CD8-positive, alpha-beta memory T cell (primary cell): ENCODE measurements at regions of chr15 and their contacts with region 1.

Region 1: DNA sequence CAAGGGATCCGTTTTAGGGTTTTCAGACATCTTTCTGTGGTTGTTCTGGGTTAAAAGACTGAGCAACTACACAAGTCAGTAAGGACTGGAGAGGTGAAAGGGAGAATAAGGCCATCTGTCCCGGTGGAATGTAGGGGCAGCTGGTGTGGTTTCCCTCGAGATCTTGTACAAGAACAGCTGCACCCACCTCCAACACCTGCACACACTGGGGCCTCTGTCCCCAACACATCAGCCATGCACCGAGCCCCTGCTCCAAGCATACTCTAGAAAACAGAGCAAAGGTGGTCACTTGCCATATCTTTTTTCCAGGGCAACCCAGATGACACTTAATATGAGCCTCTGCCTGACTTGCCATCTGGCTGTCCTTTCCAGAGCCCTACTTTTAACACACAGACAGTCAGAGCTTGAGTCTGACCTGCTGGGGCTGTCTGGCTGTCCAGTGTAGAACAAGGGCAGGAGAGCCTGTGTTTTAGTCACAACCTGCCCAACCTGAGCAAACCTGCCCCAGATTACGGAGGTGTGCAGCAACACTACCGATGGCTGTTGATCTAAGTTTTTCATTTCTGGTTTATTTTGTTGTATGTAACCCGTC is 12.2 kb downstream of the MAN2A2 start:
- DNase-seq: no peak
- H3K4me3 ChIP-seq: no peak overlapping the region
- H3K4me3 Mint-ChIP-seq: no peak overlapping the region
- H3K27ac ChIP-seq: peak overlapping the region; percentile 65
- H3K27ac Mint-ChIP-seq: peak overlapping the region in 3 of 8 donors; percentile 32 to 83 (median 75)
- H3K4me1 ChIP-seq: no peaks in the 10 kb centered on the region
- H3K4me1 Mint-ChIP-seq: no peaks in the 10 kb centered on the region
- H3K27me3 ChIP-seq: no peaks in the 10 kb centered on the region
- H3K27me3 Mint-ChIP-seq: peaks cover 0 to 4% of the 10 kb centered on the region in 2 donors

Region 2: DNA sequence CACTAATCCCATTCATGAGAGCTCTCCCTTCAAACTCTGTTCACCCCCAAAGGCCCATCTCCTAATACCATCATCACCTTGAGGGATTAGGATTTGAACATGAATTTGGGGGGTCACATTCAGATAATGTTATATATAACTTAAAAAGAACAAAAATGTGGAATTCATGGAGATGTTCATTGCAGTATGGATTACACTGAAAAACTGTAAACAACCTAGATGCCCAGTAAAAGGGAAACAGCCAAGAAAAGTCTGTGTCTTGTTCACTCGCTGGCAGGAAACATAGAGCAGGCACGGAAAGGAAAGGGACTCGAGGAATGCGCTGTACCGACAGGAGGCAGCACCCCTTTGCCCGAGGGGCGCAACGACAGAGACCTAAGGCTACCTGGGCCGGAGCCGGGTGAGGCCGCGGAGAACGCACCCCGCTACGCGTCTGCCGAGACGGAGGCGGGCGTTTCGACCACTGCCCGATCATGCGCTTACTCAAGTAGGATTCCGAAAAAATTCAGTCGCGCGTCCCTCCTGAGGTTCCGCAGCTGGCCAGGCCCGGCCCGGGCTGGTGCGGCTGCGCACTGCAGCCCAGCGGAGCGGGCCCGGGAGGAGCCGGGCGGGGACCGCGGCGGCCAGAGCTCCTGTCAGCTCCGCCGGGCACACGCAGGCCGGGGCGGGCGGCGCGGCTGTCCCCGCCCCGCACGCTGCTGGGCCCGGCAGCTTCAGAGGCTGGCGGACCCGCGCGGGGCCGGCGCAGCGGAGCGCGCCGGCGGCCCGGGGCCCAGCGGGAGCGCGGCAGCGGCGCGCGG is 13.1 kb before region 1 on chr15:
- CTCF ChIA-PET with region 1: interaction called, 13 read pairs
- POLR2A ChIA-PET with region 1: no interaction called
- DNase-seq: peak; percentile 59 to 81 (median 74)
- H3K4me3 ChIP-seq: peak overlapping the region; percentile 87
- H3K4me3 Mint-ChIP-seq: peak overlapping the region; percentile 86 to 93 (median 91)
- H3K27ac ChIP-seq: peak overlapping the region; percentile 84
- H3K27ac Mint-ChIP-seq: peak overlapping the region; percentile 87 to 96 (median 92)
- H3K4me1 ChIP-seq: peaks cover 20% of the 10 kb centered on the region
- H3K4me1 Mint-ChIP-seq: peaks cover 21 to 37% (median 21%) of the 10 kb centered on the region in 3 donors
- H3K27me3 ChIP-seq: no peaks in the 10 kb centered on the region
- H3K27me3 Mint-ChIP-seq: no peaks in the 10 kb centered on the region

Region 3: GRCh38 chr15:90970274-90970673 is 55.0 kb after region 1 on chr15:
- CTCF ChIA-PET with region 1: no interaction called
- POLR2A ChIA-PET with region 1: no interaction called
- DNase-seq: no peak
- H3K4me3 ChIP-seq: no peak overlapping the region
- H3K4me3 Mint-ChIP-seq: no peak overlapping the region
- H3K27ac ChIP-seq: no peak overlapping the region
- H3K27ac Mint-ChIP-seq: no peak overlapping the region
- H3K4me1 ChIP-seq: no peaks in the 10 kb centered on the region
- H3K4me1 Mint-ChIP-seq: no peaks in the 10 kb centered on the region
- H3K27me3 ChIP-seq: no peaks in the 10 kb centered on the region
- H3K27me3 Mint-ChIP-seq: peaks cover 0 to 1% of the 10 kb centered on the region in 2 donors

Region 4: GRCh38 chr15:91049378-91050127 is 134.2 kb after region 1 on chr15:
- CTCF ChIA-PET with region 1: no interaction called
- POLR2A ChIA-PET with region 1: no interaction called
- DNase-seq: peak; percentile 12 to 67 (median 40)
- H3K4me3 ChIP-seq: no peak overlapping the region
- H3K4me3 Mint-ChIP-seq: peak overlapping the region in 2 of 7 donors; percentile 5 to 37
- H3K27ac ChIP-seq: no peak overlapping the region
- H3K27ac Mint-ChIP-seq: peak overlapping the region in 2 of 8 donors; percentile 6 to 86
- H3K4me1 ChIP-seq: peaks cover 18% of the 10 kb centered on the region
- H3K4me1 Mint-ChIP-seq: peaks cover 25 to 29% (median 28%) of the 10 kb centered on the region in 3 donors
- H3K27me3 ChIP-seq: peaks cover under 1% of the 10 kb centered on the region
- H3K27me3 Mint-ChIP-seq: peaks cover 9 to 24% of the 10 kb centered on the region in 2 donors

Region 5: GRCh38 chr15:91561371-91562100 is 646.2 kb after region 1 on chr15:
- CTCF ChIA-PET with region 1: no interaction called
- POLR2A ChIA-PET with region 1: no interaction called
- DNase-seq: no peak
- H3K4me3 ChIP-seq: no peak overlapping the region
- H3K4me3 Mint-ChIP-seq: no peak overlapping the region
- H3K27ac ChIP-seq: no peak overlapping the region
- H3K27ac Mint-ChIP-seq: peak overlapping the region in 1 of 8 donors; percentile 12
- H3K4me1 ChIP-seq: no peaks in the 10 kb centered on the region
- H3K4me1 Mint-ChIP-seq: no peaks in the 10 kb centered on the region
- H3K27me3 ChIP-seq: no peaks in the 10 kb centered on the region
- H3K27me3 Mint-ChIP-seq: peaks cover 11 to 24% of the 10 kb centered on the region in 2 donors